Esophagus squamous epithelium (tissue), 5 donors: ENCODE measurements at regions of chr7 and their contacts with region 1.

Region 1: GRCh38 chr7:82044497-82045080 is 274.7 kb upstream of the HGF start:
- DNase-seq: no peak
- H3K4me3 ChIP-seq: no peak overlapping the region
- H3K27ac ChIP-seq: no peak overlapping the region
- H3K4me1 ChIP-seq: no peaks in the 10 kb centered on the region
- H3K27me3 ChIP-seq: no peaks in the 10 kb centered on the region
- CTCF ChIP-seq: peak in 5 of 6 experiments; percentile 44 to 82 (median 66)
- POLR2A ChIP-seq: no peak

Region 2: DNA sequence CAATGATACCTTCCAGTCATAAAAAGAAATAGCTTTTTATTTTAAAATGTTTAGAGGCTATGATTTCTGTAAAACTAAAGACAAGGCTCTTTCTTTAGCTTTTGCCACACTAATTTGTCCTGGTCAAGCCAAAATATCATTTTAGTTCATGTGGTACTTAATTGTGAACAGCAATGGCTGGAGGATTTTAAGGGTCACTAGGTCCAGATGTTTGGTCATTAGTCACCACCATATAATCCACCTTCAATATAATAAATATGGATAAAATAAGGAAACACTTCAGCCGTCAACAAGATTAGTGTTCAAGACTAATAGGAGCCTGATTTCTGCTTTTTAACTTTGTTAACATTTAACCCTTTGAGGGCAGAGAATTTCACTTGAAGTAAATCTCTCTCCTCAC is 224.7 kb before region 1 on chr7:
- intact Hi-C with region 1: no loop called
- DNase-seq: no peak
- H3K4me3 ChIP-seq: no peak overlapping the region
- H3K27ac ChIP-seq: no peak overlapping the region
- H3K4me1 ChIP-seq: no peaks in the 10 kb centered on the region
- H3K27me3 ChIP-seq: no peaks in the 10 kb centered on the region
- CTCF ChIP-seq: no peak
- POLR2A ChIP-seq: no peak

Region 3: DNA sequence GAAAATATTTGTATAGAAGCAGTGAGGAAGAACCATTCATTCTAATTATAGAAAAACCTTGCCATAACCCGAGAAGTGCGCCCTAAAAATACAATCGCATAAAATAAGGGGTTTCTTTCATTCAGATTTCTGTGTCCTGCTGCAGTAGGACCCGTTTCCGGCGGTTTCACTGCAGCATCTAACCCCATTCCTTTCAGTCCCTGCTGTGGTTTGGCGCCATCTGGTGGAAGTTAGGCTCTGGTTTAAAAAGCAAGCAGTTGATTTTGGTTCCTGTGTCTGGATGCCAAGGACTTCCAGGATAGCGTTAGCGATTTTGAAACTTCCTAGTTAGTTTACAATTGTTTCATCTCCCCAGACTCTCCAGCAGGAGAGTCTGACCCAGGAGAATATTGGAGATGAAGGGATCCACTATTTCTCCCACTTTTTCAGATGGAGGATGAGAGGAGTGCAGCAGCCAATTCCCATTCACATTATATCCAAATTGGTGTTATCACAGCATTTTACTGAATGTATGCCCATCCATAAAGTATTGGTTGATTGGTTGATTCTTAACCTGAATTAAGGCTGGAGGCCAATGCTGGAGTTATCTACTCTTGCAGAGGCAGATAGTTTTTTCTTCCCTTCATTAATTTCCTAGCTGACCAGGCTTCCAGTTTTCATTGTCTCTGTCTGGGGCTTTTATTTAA is 527.7 kb after region 1 on chr7:
- intact Hi-C with region 1: loop called (anchors 10 kb)
- DNase-seq: no peak
- H3K4me3 ChIP-seq: no peak overlapping the region
- H3K27ac ChIP-seq: no peak overlapping the region
- H3K4me1 ChIP-seq: peaks cover 0 to 6% (median 0%) of the 10 kb centered on the region in 3 donors
- H3K27me3 ChIP-seq: no peaks in the 10 kb centered on the region
- CTCF ChIP-seq: peak; percentile 62 to 93 (median 80)
- POLR2A ChIP-seq: no peak

Region 4: GRCh38 chr7:82605247-82605872 is 560.8 kb after region 1 on chr7:
- intact Hi-C with region 1: loop called (anchors 10 kb)
- DNase-seq: no peak
- H3K4me3 ChIP-seq: no peak overlapping the region
- H3K27ac ChIP-seq: no peak overlapping the region
- H3K4me1 ChIP-seq: no peaks in the 10 kb centered on the region
- H3K27me3 ChIP-seq: no peaks in the 10 kb centered on the region
- CTCF ChIP-seq: peak in 5 of 6 experiments; percentile 31 to 74 (median 57)
- POLR2A ChIP-seq: no peak

Region 5: GRCh38 chr7:82729172-82730030 is 684.8 kb after region 1 on chr7:
- intact Hi-C with region 1: loop called (anchors 5 kb)
- DNase-seq: no peak
- H3K4me3 ChIP-seq: no peak overlapping the region
- H3K27ac ChIP-seq: no peak overlapping the region
- H3K4me1 ChIP-seq: no peaks in the 10 kb centered on the region
- H3K27me3 ChIP-seq: no peaks in the 10 kb centered on the region
- CTCF ChIP-seq: peak in 5 of 6 experiments; percentile 43 to 63 (median 45)
- POLR2A ChIP-seq: no peak